Dorsolateral prefrontal cortex (tissue), 120 donors: ENCODE measurements at regions of chr12 and their contacts with region 1.

Region 1: DNA sequence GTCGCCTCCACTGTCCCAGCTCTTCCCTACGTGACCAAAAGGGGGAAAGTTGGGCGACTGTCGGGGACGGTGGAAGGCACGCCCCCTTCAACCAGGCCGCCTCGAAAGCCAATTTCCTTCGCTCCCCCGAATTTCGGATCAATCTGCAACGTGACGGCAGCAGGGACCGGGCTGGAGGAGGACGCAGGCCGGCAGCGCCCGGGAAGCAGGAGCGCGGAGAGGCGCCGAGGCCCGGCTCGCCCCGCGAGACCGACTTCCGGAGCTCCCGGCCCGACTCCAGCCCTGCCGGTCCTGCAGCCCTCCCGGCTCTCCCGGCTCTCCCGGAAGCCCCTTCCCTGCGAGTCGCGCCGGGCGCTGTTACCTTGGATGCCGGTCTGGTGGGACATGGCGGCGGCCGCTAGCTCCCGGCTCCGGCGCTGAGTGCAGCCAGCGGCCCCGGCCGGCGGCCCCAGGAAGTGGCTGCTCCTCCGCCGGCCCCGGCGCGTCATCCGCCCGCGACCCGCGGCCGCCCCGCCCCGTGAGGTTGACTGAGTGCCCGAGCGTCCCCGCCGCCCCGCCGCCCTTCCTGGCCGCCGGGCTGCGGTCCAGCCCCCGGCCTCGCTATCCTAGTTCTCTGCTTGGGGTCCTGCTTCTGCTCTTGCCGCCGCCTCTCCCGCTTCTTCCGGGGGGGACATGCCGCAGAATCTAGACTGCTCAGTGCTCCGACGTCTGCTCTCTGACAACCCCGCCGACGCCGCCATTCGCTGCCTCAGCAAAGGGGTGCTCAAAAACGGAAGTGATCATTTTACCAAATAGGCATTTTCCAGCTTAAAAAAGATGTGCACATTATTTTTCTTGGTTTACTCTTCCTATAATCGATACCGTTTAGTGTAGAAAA is at the start of gene TWF1:
- DNase-seq: peak; percentile 73 to 94 (median 84)
- H3K4me3 ChIP-seq: peak within 1 kb of the TSS; percentile 64 to 99 (median 90)
- H3K27ac ChIP-seq: peak within 1 kb of the TSS; percentile 55 to 99 (median 95)
- H3K27me3 ChIP-seq: no peaks in the 10 kb centered on the region
- CTCF ChIP-seq: peak in 29 of 56 donors; percentile 3 to 54 (median 18)
- total RNA-seq, gene TWF1: 32.8 to 64.6 (median 44.9) TPM

Region 2: GRCh38 chr12:43758728-43759563 is 47.2 kb before region 1 on chr12 and contains the starts of genes IRAK4 and PUS7L:
- intact Hi-C with region 1: loop called (anchors 5 to 10 kb)
- DNase-seq: peak; percentile 92 to 96 (median 94)
- H3K4me3 ChIP-seq: peak within 1 kb of the TSS; percentile 60 to 97 (median 84)
- H3K27ac ChIP-seq: peak within 1 kb of the TSS in 54 of 59 donors; percentile 14 to 90 (median 67)
- H3K27me3 ChIP-seq: no peaks in the 10 kb centered on the region
- CTCF ChIP-seq: peak in 55 of 56 donors; percentile 32 to 78 (median 60)
- total RNA-seq, gene IRAK4: 4.0 to 15.1 (median 8.3) TPM
- total RNA-seq, gene PUS7L: 12.6 to 43.8 (median 22.5) TPM

Region 3: GRCh38 chr12:43835656-43836474 is 29.8 kb after region 1 on chr12 and contains the start of gene TMEM117:
- intact Hi-C with region 1: loop called in 1 of 2 experiments (anchors 1 kb)
- DNase-seq: peak; percentile 32 to 79 (median 46)
- H3K4me3 ChIP-seq: peak within 1 kb of the TSS; percentile 63 to 92 (median 82)
- H3K27ac ChIP-seq: peak within 1 kb of the TSS; percentile 53 to 96 (median 88)
- H3K27me3 ChIP-seq: no peaks in the 10 kb centered on the region
- CTCF ChIP-seq: peak in 3 of 56 donors; percentile 3 to 19 (median 9)
- total RNA-seq, gene TMEM117: 6.6 to 19.0 (median 12.4) TPM